ENCODE measurements at regions of chr3 and their contacts with region 1.

Region 1: GRCh38 chr3:64945171-64945729 is 257.4 kb upstream of the ADAMTS9 start:
- DNase-seq: no peak
- ATAC-seq: no peak
- H3K4me3 ChIP-seq: no peak overlapping the region
- H3K27ac ChIP-seq: no peak overlapping the region
- H3K4me1 ChIP-seq: no peaks in the 10 kb centered on the region
- H3K27me3 ChIP-seq: peaks cover 2% of the 10 kb centered on the region; the same call in 1 of the 2 replicates
- CTCF ChIP-seq: no peak
- POLR2A ChIP-seq: no peak
- RAD21 ChIP-seq: no peak

Region 2: DNA sequence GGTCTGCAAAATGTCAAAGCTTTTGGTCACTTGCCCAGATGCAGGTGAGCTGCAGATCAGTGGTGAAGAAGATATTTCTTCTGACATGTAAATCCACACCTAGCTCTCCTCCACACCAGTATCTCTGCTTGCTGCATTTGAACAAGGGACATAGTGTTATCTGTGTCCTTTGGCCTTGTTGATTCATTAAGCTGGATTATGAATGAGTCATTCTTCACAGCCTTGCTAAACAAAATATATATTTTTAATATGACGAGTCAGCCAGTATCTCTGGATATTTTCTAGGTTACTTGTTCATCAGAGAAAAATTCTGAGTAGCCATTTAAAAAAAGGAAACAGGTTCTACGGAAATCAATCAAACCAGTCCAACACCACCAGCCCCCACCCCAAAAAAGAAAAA is 66.9 kb before region 1 on chr3:
- CTCF ChIA-PET with region 1: no interaction called
- POLR2A ChIA-PET with region 1: no interaction called
- dilution Hi-C with region 1: no loop called
- in situ Hi-C with region 1: no loop called
- intact Hi-C with region 1: no loop called
- DNase-seq: peak; percentile 62
- ATAC-seq: peak; percentile 64
- H3K4me3 ChIP-seq: no peak overlapping the region
- H3K27ac ChIP-seq: no peak overlapping the region
- H3K4me1 ChIP-seq: no peaks in the 10 kb centered on the region; the same call in 1 of the 2 replicates
- H3K27me3 ChIP-seq: no peaks in the 10 kb centered on the region
- CTCF ChIP-seq: no peak
- POLR2A ChIP-seq: no peak
- RAD21 ChIP-seq: no peak

Region 3: GRCh38 chr3:64957408-64958198 is 12.4 kb after region 1 on chr3:
- CTCF ChIA-PET with region 1: no interaction called
- POLR2A ChIA-PET with region 1: no interaction called
- dilution Hi-C with region 1: no loop called
- in situ Hi-C with region 1: no loop called
- intact Hi-C with region 1: no loop called
- DNase-seq: no peak
- ATAC-seq: no peak
- H3K4me3 ChIP-seq: no peak overlapping the region
- H3K27ac ChIP-seq: no peak overlapping the region
- H3K4me1 ChIP-seq: no peaks in the 10 kb centered on the region
- H3K27me3 ChIP-seq: no peaks in the 10 kb centered on the region; the same call in none of the 2 replicates
- CTCF ChIP-seq: no peak
- POLR2A ChIP-seq: no peak
- RAD21 ChIP-seq: no peak

Region 4: GRCh38 chr3:64972793-64973192 is 27.5 kb after region 1 on chr3:
- CTCF ChIA-PET with region 1: no interaction called
- POLR2A ChIA-PET with region 1: no interaction called
- dilution Hi-C with region 1: no loop called
- in situ Hi-C with region 1: no loop called
- intact Hi-C with region 1: loop called (anchors 1 kb)
- DNase-seq: peak; percentile 54
- ATAC-seq: peak; percentile 59; the same call in 1 of the 2 replicates
- H3K4me3 ChIP-seq: no peak overlapping the region
- H3K27ac ChIP-seq: no peak overlapping the region
- H3K4me1 ChIP-seq: peaks cover 4% of the 10 kb centered on the region; the same call in 1 of the 2 replicates
- H3K27me3 ChIP-seq: no peaks in the 10 kb centered on the region
- CTCF ChIP-seq: no peak
- POLR2A ChIP-seq: no peak
- RAD21 ChIP-seq: no peak

Region 5: DNA sequence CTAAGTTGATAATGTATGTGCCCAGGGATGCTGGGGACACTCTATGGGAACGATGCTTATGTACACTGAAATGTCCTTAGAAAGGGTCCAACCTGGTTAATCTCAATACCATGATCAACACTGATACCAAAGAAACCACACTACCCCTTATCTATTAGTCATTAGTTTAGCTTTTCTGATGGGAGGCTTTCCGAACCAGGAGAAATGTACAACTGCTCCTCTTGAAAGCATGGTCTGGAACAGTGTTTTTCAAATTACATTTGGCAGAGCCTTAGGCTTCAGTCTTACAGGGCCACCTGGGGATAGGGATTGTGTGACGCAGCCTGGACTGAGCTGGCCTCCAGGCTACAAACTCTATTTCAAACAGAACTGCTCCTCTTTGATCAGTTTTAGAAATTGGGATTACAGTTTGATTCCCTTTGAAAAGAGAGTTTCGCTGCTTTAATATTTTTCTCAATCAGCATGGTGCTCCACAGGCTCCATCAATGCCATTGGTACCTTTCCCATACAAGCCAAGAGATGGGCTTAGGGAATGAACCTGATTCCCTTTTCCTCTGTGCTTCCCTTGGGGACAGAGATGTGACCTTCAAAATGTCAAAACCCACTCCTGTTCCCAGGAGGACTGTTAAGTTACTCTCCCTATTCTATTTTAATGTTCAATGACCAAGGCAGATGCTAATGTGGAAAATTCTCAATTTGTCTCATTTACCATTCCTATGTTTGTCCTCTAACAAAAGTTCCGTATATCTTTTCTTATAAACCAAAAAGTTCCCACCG is 38.5 kb after region 1 on chr3:
- CTCF ChIA-PET with region 1: no interaction called
- POLR2A ChIA-PET with region 1: no interaction called
- dilution Hi-C with region 1: no loop called
- in situ Hi-C with region 1: no loop called
- intact Hi-C with region 1: no loop called
- DNase-seq: no peak
- ATAC-seq: no peak
- H3K4me3 ChIP-seq: no peak overlapping the region
- H3K27ac ChIP-seq: no peak overlapping the region
- H3K4me1 ChIP-seq: no peaks in the 10 kb centered on the region
- H3K27me3 ChIP-seq: no peaks in the 10 kb centered on the region
- CTCF ChIP-seq: no peak
- POLR2A ChIP-seq: no peak
- RAD21 ChIP-seq: no peak